BJ (cell line): ENCODE measurements at regions of chr3 and their contacts with region 1.

Region 1: DNA sequence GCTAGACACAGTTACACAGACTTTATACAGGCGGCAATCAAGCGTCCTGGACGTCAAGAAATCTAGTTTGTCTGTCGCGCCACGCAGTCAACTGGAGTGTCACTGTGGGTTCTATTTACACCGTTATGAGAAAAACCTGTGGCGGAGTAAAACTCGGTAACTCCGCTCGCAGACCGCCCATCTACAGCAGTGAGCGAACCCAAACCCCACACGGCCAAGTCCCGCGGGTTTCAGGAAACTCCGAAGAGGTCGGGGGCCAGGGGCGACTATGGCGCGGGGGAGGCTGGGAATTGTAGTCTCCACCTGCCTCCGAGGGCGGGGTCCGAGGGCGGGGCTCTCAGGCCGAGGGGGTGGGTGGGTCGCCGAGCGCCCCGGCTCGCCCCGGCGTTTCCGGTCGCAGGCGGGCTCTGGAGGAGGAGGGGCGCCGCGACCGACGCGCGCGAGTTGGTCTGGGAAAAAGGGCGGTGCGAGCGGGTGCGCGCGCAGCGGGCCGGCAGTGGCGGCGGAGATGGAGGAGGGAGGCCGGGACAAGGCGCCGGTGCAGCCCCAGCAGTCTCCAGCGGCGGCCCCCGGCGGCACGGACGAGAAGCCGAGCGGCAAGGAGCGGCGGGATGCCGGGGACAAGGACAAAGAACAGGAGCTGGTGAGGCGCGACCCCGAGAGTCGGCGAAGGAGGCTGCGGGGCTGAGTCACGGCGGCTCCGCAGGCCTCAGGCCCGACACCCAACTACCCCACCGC is at the start of gene PSMD2:
- DNase-seq: peak; percentile 65
- H3K4me3 ChIP-seq: peak within 1 kb of the TSS; percentile 87
- H3K27me3 ChIP-seq: 0 out of 2 replicates have a peak, but pooled peaks cover 1% of the 10 kb centered on the region
- CTCF ChIP-seq: no peak
- polyA plus RNA-seq, gene PSMD2: 262 and 330 TPM in 2 replicates

Region 2: DNA sequence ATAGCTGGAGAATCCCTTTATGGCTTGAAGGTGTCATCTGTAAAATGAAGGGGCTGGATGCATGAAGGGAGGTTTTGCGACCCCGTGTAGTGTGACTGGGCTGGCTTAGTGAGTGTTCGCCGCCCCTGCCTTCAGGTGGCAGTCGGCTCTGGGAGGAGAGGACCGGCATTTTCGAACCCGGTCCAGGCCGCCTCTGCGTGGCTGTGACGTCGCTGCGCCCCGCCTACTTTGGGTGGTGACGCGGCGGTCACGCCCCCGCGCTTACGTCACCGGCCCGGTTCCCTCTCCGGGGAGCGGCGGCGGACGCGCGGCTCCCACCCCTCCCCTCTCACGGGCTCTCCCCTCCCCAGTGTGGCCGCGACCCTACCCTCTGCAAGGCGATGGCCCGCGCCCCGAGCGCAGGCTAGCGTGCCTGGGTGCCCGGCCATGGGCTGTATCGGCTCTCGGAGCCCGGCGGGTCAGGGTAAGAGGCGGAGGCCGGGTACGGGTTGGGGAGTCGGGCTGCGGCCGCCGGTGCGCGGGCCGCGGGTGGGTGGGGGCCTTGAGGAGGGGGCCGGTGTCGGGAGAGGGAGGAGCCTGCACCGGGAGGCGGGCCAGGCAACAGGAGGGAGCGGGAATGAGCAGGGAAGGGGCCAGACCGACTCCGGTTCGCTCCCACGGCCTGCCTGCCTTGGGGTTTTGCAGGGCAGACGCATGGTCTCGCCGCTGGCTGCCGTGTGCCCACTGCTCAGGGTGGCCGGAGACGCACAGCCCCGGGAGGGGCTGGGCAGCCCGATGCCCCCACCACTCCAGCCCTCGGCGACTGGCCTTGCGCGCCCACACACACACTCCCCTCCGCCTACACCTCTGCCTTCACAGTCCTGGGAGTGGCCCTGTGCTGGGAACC is 37.0 kb after region 1 on chr3:
- CTCF ChIA-PET with region 1: interaction called, 3 read pairs
- POLR2A ChIA-PET with region 1: interaction called, 14 read pairs
- DNase-seq: no peak
- H3K4me3 ChIP-seq: peak overlapping the region; percentile 71
- H3K27me3 ChIP-seq: no peaks in the 10 kb centered on the region
- CTCF ChIP-seq: no peak